Dendritic cell treated with granulocyte-macrophage colony-stimulating factor and Interleukin-4, amounts not matched to agents 40 ng/mL and 50 ng/mL, for 4 days (primary cell): ENCODE measurements at regions of chr13 and their contacts with region 1.

Region 1: GRCh38 chr13:33454844-33455705 is 169.5 kb upstream of the STARD13 start:
- H3K4me3 Mint-ChIP-seq: no peak overlapping the region
- H3K27ac Mint-ChIP-seq: no peak overlapping the region
- H3K4me1 Mint-ChIP-seq: no peaks in the 10 kb centered on the region
- H3K27me3 Mint-ChIP-seq: no peaks in the 10 kb centered on the region

Region 2: DNA sequence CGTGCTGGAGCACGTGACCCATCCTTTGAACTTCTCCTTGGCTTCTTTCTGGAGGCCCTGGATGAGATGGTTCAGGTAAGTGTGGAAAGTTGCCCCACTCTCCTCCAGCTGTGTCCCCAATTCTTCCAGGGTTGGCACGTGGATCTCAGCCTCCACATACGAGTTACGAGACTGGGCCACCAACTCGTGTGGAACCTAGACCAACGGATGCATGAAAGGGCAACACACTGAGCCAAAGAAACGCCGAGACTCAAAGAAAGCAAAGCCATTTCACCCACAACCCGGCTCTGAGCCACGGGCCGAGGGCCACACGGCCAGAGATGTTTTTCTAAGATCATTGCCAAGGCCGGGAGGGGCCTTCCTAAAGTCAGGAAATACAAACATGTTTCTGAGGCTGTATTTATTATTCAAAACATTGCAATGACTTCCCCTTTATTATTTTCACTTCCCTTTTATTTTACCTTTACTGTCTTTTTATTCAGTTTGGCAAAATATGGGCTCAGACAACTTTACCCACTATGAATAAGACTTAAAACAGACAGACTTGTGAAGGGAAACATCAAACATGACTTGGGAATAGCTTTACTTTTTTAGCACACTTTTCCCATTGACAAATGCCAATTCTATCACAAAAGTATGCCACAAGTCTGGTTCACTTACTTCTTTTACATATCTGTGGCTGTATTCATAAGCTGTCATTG is 344.2 kb before region 1 on chr13:
- intact Hi-C with region 1: no loop called
- H3K4me3 Mint-ChIP-seq: peak overlapping the region; percentile 30
- H3K27ac Mint-ChIP-seq: peak overlapping the region; percentile 85
- H3K4me1 Mint-ChIP-seq: peaks cover 75% of the 10 kb centered on the region
- H3K27me3 Mint-ChIP-seq: no peaks in the 10 kb centered on the region

Region 3: GRCh38 chr13:33401238-33401637 is 53.8 kb before region 1 on chr13:
- intact Hi-C with region 1: no loop called
- H3K4me3 Mint-ChIP-seq: no peak overlapping the region
- H3K27ac Mint-ChIP-seq: no peak overlapping the region
- H3K4me1 Mint-ChIP-seq: no peaks in the 10 kb centered on the region
- H3K27me3 Mint-ChIP-seq: no peaks in the 10 kb centered on the region

Region 4: DNA sequence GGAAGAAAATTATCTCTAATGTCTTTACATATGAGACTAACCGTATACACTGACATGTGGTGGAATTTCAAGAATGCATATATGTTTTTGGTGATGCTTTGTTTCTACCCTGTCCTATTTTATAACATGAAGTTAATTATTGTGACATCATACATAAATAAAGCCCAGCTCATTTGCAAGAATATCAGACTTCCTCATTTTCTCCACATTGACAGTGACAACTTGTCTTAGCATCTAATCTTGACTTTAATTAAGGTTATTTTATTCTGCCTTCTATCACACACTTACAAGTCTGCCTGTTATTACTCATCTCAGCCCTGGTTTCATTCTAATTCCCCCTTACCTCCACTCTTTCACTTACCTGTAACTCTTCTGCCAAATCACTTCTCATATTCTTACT is 28.9 kb before region 1 on chr13:
- intact Hi-C with region 1: loop called (anchors 2 kb)
- H3K4me3 Mint-ChIP-seq: no peak overlapping the region
- H3K27ac Mint-ChIP-seq: no peak overlapping the region
- H3K4me1 Mint-ChIP-seq: peaks cover 5% of the 10 kb centered on the region
- H3K27me3 Mint-ChIP-seq: no peaks in the 10 kb centered on the region

Region 5: GRCh38 chr13:33817513-33817900 is 362.4 kb after region 1 on chr13:
- intact Hi-C with region 1: no loop called
- H3K4me3 Mint-ChIP-seq: peak overlapping the region; percentile 96
- H3K27ac Mint-ChIP-seq: peak overlapping the region; percentile 93
- H3K4me1 Mint-ChIP-seq: peaks cover 13% of the 10 kb centered on the region
- H3K27me3 Mint-ChIP-seq: peaks cover 4% of the 10 kb centered on the region

Region 6: GRCh38 chr13:34437873-34438272 is 982.8 kb after region 1 on chr13:
- intact Hi-C with region 1: no loop called
- H3K4me3 Mint-ChIP-seq: no peak overlapping the region
- H3K27ac Mint-ChIP-seq: no peak overlapping the region
- H3K4me1 Mint-ChIP-seq: no peaks in the 10 kb centered on the region
- H3K27me3 Mint-ChIP-seq: no peaks in the 10 kb centered on the region